Cardiac septum (tissue), 1 donor: ENCODE measurements at regions of chr1 and their contacts with region 1.

Region 1: DNA sequence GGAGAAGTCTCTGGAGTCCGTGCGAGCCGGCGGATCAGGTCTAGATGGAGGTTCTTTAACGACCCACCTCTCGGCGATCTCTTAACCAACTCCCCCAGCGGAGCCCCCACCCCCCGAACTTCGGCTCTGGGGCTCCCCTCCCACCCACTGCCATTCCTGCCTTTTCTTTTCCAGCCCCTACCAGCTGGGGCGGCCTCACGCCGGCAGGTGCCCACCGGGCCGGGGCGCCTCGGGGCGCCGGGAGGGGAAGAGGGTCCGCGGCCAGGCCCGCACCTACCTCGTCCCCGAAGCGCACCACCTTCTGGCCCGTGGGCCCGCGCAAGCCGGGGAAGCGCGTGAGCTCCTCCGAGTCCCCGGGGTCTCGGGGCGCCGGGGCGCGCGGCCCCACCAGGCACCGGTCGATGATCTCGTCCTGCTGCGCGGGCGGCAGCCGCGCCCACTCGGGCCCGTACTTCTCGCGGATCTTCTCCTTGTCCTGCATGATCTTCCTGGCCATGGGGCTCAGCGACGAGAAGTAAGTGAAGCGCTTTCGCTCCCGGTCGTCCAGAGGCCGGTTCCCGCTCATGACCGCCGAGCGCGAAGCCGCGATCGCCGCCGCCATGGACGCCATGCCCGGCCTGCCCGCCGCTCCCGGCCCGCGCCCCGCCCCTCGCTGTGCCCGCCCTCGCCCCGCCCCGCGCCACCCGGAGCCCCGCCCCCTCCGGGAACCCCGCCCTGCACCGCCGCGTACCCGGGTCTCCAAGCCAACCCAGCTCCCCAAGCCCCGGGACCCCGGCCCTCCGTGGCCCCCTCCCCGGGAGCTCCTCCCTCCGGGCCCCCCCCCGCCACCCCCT is at the start of gene C1orf198:
- DNase-seq: peak; percentile 93
- total RNA-seq, gene C1orf198: 73.9 TPM

Region 2: DNA sequence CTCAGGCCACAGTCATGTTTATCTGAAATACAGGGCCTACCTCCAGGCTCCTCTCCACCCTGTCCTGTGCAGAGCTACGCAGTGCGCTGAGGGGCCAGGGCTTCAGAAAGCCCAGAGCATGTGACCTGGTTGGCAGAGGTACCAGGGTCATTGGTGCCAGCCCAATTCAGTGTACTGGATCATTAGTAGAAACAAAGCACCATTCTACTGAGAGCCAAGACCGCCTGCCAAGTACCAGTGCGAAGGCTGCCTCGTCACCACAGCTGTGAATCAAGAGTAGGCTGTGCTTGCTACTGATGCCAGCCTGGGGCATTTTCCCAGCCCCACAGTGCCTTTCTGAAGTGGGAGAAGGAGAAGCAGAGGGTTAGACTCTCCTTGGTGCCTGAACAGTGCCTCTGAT is 61.1 kb before region 1 on chr1:
- intact Hi-C with region 1: loop called (anchors 5 kb)
- DNase-seq: peak; percentile 86

Region 3: DNA sequence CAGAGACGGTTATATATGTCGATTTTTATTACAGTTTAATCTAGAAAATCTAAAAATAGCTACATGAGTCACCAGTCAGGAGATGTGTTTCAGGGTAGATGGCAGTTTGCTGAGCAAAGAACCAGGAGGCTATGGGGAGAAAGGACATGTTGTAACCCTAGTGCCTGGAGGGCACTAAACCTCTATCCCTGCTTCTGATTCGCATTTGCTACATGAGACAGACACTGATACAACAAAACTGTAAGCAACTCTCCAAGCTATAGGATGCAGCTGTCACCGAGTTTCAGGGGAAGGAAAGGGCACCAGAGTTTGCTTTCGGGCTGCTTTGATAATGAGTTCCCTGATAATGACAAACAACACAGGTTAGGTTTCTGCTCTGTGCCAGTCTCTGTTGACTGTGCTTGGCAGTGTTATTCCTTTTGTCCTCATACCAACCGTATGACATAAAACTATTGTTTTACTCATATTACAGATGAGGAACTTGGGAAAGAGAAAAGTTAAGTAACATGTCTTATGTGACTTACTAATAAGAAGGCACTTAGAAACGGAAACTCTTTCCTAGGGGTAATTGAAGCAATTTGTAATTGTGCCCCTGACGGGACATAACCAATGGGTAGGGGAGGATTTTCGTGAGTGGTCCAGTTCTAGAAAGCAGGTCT is 42.9 kb before region 1 on chr1:
- intact Hi-C with region 1: loop called (anchors 2 kb)
- DNase-seq: no peak

Region 4: GRCh38 chr1:230849451-230850224 is 18.5 kb before region 1 on chr1:
- intact Hi-C with region 1: loop called (anchors 2 kb)
- DNase-seq: peak; percentile 86

Region 5: DNA sequence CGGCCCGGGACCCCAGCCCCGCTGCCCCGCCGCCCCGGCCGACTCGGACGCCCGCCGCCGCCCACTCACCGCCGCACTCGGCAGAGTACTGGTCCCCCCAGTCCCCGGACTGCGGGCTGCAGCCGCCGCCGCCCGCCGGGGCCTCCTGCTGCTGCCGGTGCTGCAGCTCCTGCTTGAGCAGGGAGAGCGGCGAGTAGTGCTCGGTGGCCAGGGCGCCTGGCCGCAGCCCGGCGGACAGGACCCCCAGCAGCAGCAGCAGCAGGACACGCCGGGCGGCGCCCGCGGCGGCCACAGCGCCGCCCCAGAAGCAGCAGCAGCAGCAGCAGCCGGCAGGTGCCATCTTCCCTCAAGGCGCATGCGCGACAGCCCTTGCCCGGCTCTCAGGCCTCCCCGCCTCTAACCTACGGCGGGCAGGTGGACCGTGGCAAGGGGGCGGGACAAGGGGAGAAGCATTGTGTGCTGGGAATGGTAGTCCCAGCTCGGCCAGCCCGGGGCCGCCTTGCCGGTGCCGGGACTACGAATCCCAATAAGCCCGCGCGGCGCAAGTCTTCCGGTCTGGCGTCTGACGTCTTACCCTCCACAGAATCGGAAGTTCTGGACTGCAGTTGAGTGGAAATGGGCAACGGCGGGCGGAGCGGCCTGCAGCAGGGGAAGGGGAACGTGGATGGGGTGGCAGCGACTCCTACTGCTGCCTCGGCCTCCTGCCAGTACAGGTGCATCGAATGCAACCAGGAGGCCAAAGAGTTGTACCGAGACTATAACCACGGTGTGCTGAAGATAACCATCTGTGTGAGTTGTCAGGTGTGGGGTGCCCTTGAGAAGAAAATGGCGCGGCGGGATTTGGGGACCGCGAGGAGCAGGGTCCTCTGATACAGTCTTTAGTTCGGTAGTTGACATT is 110.6 kb after region 1 on chr1 and contains the starts of genes ARV1 and TTC13:
- intact Hi-C with region 1: loop called (anchors 5 kb)
- DNase-seq: peak; percentile 100
- total RNA-seq, gene ARV1: 20.7 TPM
- total RNA-seq, gene TTC13: 8.2 TPM